MCF 10A (cell line): ENCODE measurements at regions of chr4 and their contacts with region 1.

Region 1: GRCh38 chr4:138259801-138260200 is 17.7 kb upstream of the SLC7A11 start:
- DNase-seq: peak; percentile 71
- H3K4me3 Mint-ChIP-seq: no peak overlapping the region
- H3K27ac Mint-ChIP-seq: peak overlapping the region; percentile 93
- H3K4me1 Mint-ChIP-seq: peaks cover 22% of the 10 kb centered on the region
- H3K27me3 Mint-ChIP-seq: no peaks in the 10 kb centered on the region
- CTCF ChIP-seq: no peak

Region 2: GRCh38 chr4:137359691-137360315 is 900.0 kb before region 1 on chr4:
- CTCF ChIA-PET with region 1: no interaction called
- POLR2A ChIA-PET with region 1: no interaction called
- intact Hi-C with region 1: no loop called
- DNase-seq: no peak
- H3K4me3 Mint-ChIP-seq: no peak overlapping the region
- H3K27ac Mint-ChIP-seq: no peak overlapping the region
- H3K4me1 Mint-ChIP-seq: no peaks in the 10 kb centered on the region
- H3K27me3 Mint-ChIP-seq: no peaks in the 10 kb centered on the region
- CTCF ChIP-seq: no peak

Region 3: DNA sequence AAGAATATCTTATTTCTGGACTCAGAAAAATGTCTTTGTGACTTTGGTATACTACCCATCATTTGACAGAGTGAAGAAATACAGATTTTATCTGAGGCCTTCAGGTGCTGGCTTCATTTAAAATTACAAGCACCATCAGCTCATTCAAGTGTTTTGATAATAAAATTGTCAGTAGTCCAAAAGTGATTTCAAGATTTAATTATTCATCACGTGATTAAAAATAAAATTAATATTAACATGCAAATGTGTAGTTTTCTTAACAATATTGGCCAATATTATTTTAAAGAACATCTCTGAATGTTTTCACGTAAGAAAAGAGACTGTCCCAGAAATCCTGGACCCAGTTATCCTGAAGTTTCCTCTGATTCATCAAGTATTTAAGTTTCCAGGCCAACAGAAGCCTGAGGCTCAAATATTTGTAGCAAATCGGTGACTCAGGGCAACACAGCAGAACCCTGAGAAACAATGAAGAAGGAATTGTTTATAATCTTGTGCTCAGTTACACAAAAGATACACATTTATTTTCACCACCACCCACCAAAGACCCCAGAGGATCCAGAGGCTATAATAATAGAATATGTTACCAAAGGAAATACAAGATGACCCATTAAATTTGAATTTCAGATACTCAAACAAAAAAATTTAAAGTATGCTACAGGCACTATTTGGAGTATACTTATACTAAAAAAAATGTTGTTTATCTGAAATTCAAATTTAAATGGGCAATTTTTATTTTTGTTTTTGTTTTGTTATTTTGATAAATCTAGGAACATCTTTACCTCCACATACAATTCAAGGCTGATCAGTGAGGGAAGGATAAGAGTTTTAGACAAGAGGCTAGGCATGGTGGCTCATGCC is 16.2 kb after region 1 on chr4:
- CTCF ChIA-PET with region 1: interaction called, 3 read pairs
- POLR2A ChIA-PET with region 1: interaction called, 13 read pairs
- intact Hi-C with region 1: no loop called
- DNase-seq: peak; percentile 79
- H3K4me3 Mint-ChIP-seq: no peak overlapping the region
- H3K27ac Mint-ChIP-seq: peak overlapping the region; percentile 93
- H3K4me1 Mint-ChIP-seq: peaks cover 6% of the 10 kb centered on the region
- H3K27me3 Mint-ChIP-seq: no peaks in the 10 kb centered on the region
- CTCF ChIP-seq: no peak